ENCODE measurements at regions of chr9 and their contacts with region 1.

Region 1: DNA sequence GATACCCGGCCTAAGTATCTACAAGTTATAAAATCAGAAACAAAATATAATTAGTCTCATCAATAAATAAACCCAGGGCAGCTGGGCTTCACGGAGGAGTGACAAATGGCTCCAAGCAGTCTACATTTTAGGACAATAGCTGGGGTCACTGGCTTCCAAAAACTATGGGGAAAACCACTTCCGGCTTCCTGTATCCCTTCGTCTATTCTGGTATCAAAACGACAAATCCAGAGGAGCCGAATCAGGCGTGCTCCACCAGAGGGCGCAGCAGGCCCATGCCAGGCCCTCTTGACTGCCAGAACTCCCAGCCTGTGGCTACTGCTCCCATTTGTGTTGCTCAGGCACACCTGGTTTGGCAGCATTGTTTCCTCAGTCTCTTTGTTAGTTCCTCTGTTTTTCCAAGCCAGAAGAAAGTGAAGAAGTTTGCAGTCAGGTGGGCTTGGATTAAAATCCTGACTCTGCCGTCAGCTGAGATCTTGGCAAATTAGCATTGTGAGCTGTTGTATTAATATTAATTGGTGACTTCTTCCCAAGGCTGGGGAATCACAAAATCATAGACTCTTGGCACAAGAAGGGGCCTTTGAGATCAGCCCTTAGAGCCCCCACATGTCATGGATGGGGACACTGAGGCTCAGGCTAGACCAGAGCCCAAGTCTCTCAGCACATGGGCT is 11.6 kb upstream of the RAB14 start:
- DNase-seq: peak; percentile 86
- H3K4me3 Mint-ChIP-seq: no peak overlapping the region
- H3K27ac Mint-ChIP-seq: no peak overlapping the region
- H3K4me1 Mint-ChIP-seq: peaks cover 4% of the 10 kb centered on the region
- H3K27me3 Mint-ChIP-seq: no peaks in the 10 kb centered on the region

Region 2: DNA sequence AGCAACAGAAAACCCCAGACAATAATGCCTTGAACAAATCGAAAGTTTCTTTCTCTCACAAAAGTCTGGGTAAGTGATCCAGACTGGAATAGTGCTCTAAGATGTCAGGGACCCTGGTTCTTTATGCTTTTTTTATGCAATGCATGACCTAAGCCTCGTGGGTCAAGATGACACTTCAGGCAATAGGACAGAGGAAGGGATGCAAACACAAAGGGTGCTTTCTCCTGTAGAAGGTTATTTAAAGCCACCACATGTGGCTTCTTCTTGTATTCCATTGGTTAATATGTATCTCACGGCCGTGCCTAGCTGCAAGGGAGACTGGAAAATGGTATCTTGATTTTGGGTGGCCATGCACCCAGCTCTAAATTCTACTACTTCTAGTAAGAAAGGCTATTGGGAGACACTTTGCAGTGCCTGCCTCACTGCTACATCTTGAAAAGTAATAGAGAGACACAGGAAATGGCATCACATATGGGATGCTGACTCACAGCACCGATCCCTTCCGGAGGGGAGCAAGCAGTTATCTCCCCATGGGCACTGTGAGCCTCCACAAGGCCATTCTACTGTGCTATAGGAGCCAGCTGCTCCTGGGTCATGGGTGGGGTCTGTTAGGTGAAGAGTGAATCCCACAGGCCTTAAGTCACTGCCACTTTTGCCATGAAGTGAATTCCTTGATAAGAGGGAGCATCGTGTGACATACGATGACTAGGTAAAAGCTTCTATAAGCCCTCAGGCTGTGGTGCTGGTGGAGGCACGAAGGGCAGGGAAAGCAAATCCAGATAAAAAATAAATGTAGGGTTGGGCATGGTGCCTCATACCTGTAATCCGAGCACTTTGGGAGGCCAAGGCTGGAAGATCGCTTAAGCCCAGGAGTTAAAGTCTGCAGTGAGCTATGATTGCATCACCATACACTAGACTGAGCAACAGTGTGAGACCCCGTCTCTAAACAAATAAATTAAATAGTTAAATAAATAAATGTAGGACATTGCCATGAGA is 20.9 kb after region 1 on chr9:
- CTCF ChIA-PET with region 1: interaction called, 10 read pairs
- intact Hi-C with region 1: no loop called
- DNase-seq: no peak
- H3K4me3 Mint-ChIP-seq: no peak overlapping the region
- H3K27ac Mint-ChIP-seq: no peak overlapping the region
- H3K4me1 Mint-ChIP-seq: no peaks in the 10 kb centered on the region
- H3K27me3 Mint-ChIP-seq: no peaks in the 10 kb centered on the region

Region 3: GRCh38 chr9:121267689-121268597 is 54.7 kb after region 1 on chr9 and contains the start of gene GSN:
- CTCF ChIA-PET with region 1: interaction called, 11 read pairs
- intact Hi-C with region 1: no loop called
- DNase-seq: peak; percentile 51
- H3K4me3 Mint-ChIP-seq: peak within 1 kb of the TSS; percentile 61
- H3K27ac Mint-ChIP-seq: no peak within 1 kb of the TSS
- H3K4me1 Mint-ChIP-seq: peaks cover 10% of the 10 kb centered on the region
- H3K27me3 Mint-ChIP-seq: peaks cover 18% of the 10 kb centered on the region
- total RNA-seq, gene GSN: 1.1 to 1.2 TPM

Region 4: GRCh38 chr9:121278535-121279261 is 65.4 kb after region 1 on chr9:
- CTCF ChIA-PET with region 1: interaction called, 14 read pairs
- intact Hi-C with region 1: loop called (anchors 2 kb)
- DNase-seq: peak; percentile 65
- H3K4me3 Mint-ChIP-seq: no peak overlapping the region
- H3K27ac Mint-ChIP-seq: no peak overlapping the region
- H3K4me1 Mint-ChIP-seq: peaks cover 3% of the 10 kb centered on the region
- H3K27me3 Mint-ChIP-seq: no peaks in the 10 kb centered on the region

Region 5: GRCh38 chr9:121299467-121300234 is 86.4 kb after region 1 on chr9:
- CTCF ChIA-PET with region 1: interaction called, 6 read pairs
- intact Hi-C with region 1: loop called (anchors 5 kb)
- DNase-seq: no peak
- H3K4me3 Mint-ChIP-seq: peak overlapping the region; percentile 62
- H3K27ac Mint-ChIP-seq: no peak overlapping the region
- H3K4me1 Mint-ChIP-seq: peaks cover 15% of the 10 kb centered on the region
- H3K27me3 Mint-ChIP-seq: peaks cover 13% of the 10 kb centered on the region

Region 6: DNA sequence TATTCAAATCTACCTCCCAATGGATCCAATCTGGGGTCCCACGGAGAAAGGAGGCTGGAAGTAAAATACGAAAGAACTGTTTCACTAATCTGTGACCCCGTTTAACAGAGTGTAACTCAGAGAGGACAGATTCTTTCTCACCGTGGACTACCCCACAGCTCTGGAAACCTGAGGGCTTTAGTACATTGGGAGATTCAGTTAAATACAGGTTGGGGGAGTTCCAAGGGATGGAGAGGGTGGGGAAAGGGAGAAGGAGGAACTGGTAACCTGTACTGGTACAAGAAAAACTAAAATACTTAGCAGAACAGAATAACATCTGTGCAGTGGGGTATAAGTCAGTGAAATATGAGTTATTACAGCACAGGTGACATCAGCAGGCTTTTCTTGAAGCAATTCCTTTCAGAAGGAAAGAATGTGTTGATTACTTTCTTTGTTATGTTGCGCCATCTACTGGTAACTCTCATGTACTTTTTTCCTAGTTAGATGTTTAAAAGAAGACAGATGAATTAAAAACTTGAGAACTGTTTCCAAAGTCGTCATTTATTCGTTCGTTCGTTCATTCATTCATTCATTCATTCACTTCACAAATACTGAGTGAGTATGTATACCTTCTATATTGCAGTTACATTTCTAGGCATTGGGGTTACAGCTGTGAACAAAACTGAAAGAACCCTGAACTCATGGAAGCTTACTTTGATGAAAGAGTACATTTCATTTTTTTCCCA is 186.8 kb after region 1 on chr9:
- CTCF ChIA-PET with region 1: interaction called, 33 read pairs
- intact Hi-C with region 1: loop called (anchors 1 kb)
- DNase-seq: no peak
- H3K4me3 Mint-ChIP-seq: no peak overlapping the region
- H3K27ac Mint-ChIP-seq: no peak overlapping the region
- H3K4me1 Mint-ChIP-seq: no peaks in the 10 kb centered on the region
- H3K27me3 Mint-ChIP-seq: no peaks in the 10 kb centered on the region

Region 7: DNA sequence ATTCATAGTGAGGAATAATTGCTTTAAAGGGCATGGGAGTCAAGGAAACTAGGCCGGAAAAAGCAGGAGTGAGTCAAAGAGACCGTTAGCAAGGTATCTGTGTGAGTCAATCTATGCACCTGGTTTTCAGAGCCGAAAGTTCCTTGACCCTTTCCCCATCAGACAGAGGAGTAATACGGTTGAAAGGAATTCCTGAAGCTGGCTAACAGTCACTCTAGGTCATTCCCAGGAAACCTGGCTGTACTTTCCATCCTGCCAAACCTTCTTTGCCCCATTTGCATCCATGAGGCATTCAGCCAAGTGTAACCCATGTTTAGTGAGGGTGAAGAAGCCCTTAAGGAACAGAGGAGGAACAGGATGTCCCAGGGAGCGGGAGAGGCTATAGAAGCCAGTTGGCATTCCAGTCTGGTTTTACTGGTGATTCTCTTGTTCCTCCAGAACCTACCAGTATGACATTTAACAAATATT is 1035.2 kb after region 1 on chr9:
- CTCF ChIA-PET with region 1: no interaction called
- intact Hi-C with region 1: no loop called
- DNase-seq: no peak
- H3K4me3 Mint-ChIP-seq: no peak overlapping the region
- H3K27ac Mint-ChIP-seq: no peak overlapping the region
- H3K4me1 Mint-ChIP-seq: no peaks in the 10 kb centered on the region
- H3K27me3 Mint-ChIP-seq: no peaks in the 10 kb centered on the region